Heart left ventricle (tissue), 16 donors: ENCODE measurements at regions of chr5 and their contacts with region 1.

Region 1: DNA sequence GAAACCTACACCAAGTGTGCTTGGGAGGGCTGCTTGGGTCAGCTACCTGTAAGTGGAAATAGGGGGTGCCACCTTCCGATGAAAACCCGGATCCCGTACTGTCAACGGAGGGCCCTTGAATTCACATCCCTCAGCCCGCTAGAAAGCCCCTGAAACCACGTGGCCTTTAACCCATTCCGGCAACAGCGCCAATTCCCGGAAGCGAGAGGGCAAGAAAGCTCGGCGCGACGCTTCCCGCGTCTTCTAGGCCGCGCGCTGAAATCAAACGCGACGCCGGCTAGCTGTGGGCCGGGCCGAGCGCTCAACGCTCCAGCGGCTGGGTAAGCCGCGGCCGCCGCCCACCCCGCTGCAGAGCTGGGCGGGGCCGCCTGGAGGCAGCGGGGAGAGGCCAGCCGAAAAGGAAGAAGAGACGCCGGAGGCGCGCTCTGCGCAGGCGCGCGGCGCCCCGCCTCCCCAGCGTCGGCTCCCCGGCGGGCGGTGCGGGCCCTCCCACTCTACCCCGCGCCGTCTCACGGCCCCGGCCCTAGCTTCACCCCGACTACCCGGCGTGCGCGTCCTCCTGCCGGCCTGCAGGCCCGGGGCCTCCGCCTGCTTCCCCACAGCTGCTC is at the start of gene KIF2A:
- DNase-seq: peak; percentile 90 to 95 (median 92)
- ATAC-seq: peak; percentile 94 to 100 (median 98)
- H3K4me3 ChIP-seq: peak within 1 kb of the TSS; percentile 66 to 100 (median 96)
- H3K27ac ChIP-seq: peak within 1 kb of the TSS; percentile 83 to 94 (median 86)
- H3K4me1 ChIP-seq: peaks cover 0 to 39% (median 12%) of the 10 kb centered on the region in 12 donors
- H3K27me3 ChIP-seq: no peaks in the 10 kb centered on the region
- CTCF ChIP-seq: peak in 5 of 12 donors; percentile 5 to 45 (median 34)
- POLR2A ChIP-seq: peak in 1 of 2 donors; percentile 59
- total RNA-seq, gene KIF2A: 7.7 to 18.8 (median 14.3) TPM

Region 2: GRCh38 chr5:62178258-62178657 is 127.6 kb before region 1 on chr5:
- intact Hi-C with region 1: no loop called
- DNase-seq: no peak
- ATAC-seq: no peak
- H3K4me3 ChIP-seq: no peak overlapping the region
- H3K27ac ChIP-seq: no peak overlapping the region
- H3K4me1 ChIP-seq: no peaks in the 10 kb centered on the region
- H3K27me3 ChIP-seq: peaks cover 0 to 12% (median 0%) of the 10 kb centered on the region in 9 donors
- CTCF ChIP-seq: no peak
- POLR2A ChIP-seq: no peak

Region 3: DNA sequence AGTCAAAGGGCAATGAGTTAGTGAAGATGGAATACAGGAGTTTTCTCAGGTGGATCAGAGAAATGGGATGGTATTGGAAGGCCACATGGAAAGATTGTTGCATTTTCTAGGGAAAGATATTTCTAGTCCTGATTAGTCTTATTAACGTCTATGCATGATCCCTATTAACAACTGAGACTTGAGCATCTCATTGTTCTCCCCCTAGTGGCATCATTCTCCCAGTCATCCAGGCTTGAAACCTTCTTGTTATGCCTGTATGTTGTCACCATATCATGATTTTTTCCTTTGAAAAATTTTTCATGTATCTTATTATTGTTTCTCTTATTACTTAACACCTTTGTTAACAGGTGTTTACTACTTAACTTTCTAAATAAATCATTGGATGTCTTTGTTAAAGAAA is 34.6 kb after region 1 on chr5:
- intact Hi-C with region 1: loop called in 1 of 10 experiments (anchors 5 kb)
- DNase-seq: no peak
- ATAC-seq: no peak
- H3K4me3 ChIP-seq: no peak overlapping the region
- H3K27ac ChIP-seq: no peak overlapping the region
- H3K4me1 ChIP-seq: no peaks in the 10 kb centered on the region
- H3K27me3 ChIP-seq: no peaks in the 10 kb centered on the region
- CTCF ChIP-seq: peak in 3 of 12 donors; percentile 13 to 44 (median 41)
- POLR2A ChIP-seq: no peak

Region 4: GRCh38 chr5:62403434-62404250 is 97.8 kb after region 1 on chr5 and contains the start of gene DIMT1:
- intact Hi-C with region 1: loop called in 3 of 10 experiments (anchors 5 to 10 kb)
- DNase-seq: peak; percentile 96 to 97 (median 96)
- ATAC-seq: peak; percentile 99 to 100 (median 100)
- H3K4me3 ChIP-seq: peak within 1 kb of the TSS; percentile 54 to 99 (median 80)
- H3K27ac ChIP-seq: peak within 1 kb of the TSS; percentile 82 to 98 (median 96)
- H3K4me1 ChIP-seq: peaks cover 0 to 22% (median 12%) of the 10 kb centered on the region in 12 donors
- H3K27me3 ChIP-seq: no peaks in the 10 kb centered on the region
- CTCF ChIP-seq: peak in 1 of 12 donors; percentile 17
- POLR2A ChIP-seq: peak; percentile 2 to 89
- total RNA-seq, gene DIMT1: 16.5 to 23.3 (median 18.4) TPM